CD8-positive, alpha-beta T cell (primary cell): ENCODE measurements at regions of chr17 and their contacts with region 1.

Region 1: GRCh38 chr17:3723556-3724369 is at the start of gene HASPIN:
- DNase-seq: peak; percentile 80 to 96 (median 90)
- ATAC-seq: peak; percentile 90
- H3K4me3 ChIP-seq: peak within 1 kb of the TSS; percentile 89 to 99
- H3K4me3 Mint-ChIP-seq: peak within 1 kb of the TSS; percentile 88
- H3K27ac ChIP-seq: peak within 1 kb of the TSS; percentile 63 to 72
- H3K27ac Mint-ChIP-seq: peak within 1 kb of the TSS; percentile 84
- H3K4me1 ChIP-seq: peaks cover 25% of the 10 kb centered on the region
- H3K4me1 Mint-ChIP-seq: peaks cover 35% of the 10 kb centered on the region
- H3K27me3 ChIP-seq: no peaks in the 10 kb centered on the region
- H3K27me3 Mint-ChIP-seq: no peaks in the 10 kb centered on the region
- CTCF ChIP-seq: no peak
- total RNA-seq, gene HASPIN: 0.38 to 0.58 TPM

Region 2: DNA sequence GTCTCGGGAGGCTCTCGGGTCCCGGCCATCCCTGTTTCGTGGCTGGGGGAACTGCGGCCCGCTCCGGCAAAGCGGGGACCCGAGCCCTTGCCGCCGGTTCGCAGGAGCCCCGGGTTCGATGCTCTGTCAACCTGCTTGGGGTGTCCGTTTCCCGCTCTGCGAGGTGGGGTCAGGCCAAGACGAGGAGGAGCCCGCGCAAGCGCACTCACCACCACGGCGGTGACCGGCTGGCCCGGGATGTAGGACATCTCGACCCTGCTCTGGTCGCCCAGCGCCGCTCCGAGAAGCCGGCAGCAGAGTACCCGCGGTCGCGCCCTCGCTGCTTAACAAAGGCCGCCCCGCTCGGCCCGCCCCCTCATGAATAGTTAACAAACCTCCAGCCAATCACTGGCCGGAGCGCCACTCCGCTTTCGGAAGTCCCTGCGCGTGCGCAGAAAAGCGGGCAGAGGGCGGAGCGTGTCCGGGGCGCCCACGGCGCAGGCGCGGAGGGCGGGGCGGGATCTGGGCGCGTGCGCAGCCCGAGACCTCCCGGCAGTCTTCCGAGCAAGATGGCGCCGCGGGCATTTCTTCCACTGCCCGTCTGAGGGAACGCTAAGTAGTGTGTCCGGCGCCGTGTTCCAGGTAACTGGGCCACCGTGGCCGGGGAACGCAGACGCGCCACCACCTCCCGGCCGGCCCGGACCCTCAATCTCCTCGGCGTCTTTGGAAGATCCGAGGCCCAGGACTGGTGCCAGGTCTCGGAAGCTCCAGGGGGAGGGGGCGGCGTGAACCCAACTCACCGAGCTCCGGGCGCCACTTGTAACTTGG is 55.3 kb before region 1 on chr17 and contains the starts of genes EMC6 and TAX1BP3:
- CTCF ChIA-PET with region 1: no interaction called
- POLR2A ChIA-PET with region 1: no interaction called
- intact Hi-C with region 1: loop called in 1 of 2 experiments (anchors 2 kb)
- DNase-seq: peak; percentile 97 to 100 (median 98)
- ATAC-seq: peak; percentile 92
- H3K4me3 ChIP-seq: peak within 1 kb of the TSS; percentile 73 to 100
- H3K4me3 Mint-ChIP-seq: peak within 1 kb of the TSS; percentile 90
- H3K27ac ChIP-seq: peak within 1 kb of the TSS; percentile 58 to 86
- H3K27ac Mint-ChIP-seq: peak within 1 kb of the TSS; percentile 81
- H3K4me1 ChIP-seq: peaks cover 21% of the 10 kb centered on the region
- H3K4me1 Mint-ChIP-seq: peaks cover 22% of the 10 kb centered on the region
- H3K27me3 ChIP-seq: no peaks in the 10 kb centered on the region
- H3K27me3 Mint-ChIP-seq: no peaks in the 10 kb centered on the region
- CTCF ChIP-seq: no peak
- total RNA-seq, gene EMC6: 39.4 to 41.6 TPM
- total RNA-seq, gene TAX1BP3: 5.5 to 5.8 TPM

Region 3: GRCh38 chr17:3695723-3696411 is 27.9 kb before region 1 on chr17 and contains the start of gene P2RX5:
- CTCF ChIA-PET with region 1: interaction called, 3 read pairs
- POLR2A ChIA-PET with region 1: interaction called, 8 read pairs
- intact Hi-C with region 1: loop called (anchors 1 kb)
- DNase-seq: peak in 8 of 9 experiments; percentile 22 to 73 (median 44)
- ATAC-seq: peak; percentile 65
- H3K4me3 ChIP-seq: peak within 1 kb of the TSS; percentile 58 to 68
- H3K4me3 Mint-ChIP-seq: peak within 1 kb of the TSS; percentile 96
- H3K27ac ChIP-seq: peak within 1 kb of the TSS; percentile 41 to 42
- H3K27ac Mint-ChIP-seq: peak within 1 kb of the TSS; percentile 93
- H3K4me1 ChIP-seq: peaks cover 15% of the 10 kb centered on the region
- H3K4me1 Mint-ChIP-seq: peaks cover 23% of the 10 kb centered on the region
- H3K27me3 ChIP-seq: no peaks in the 10 kb centered on the region
- H3K27me3 Mint-ChIP-seq: no peaks in the 10 kb centered on the region
- CTCF ChIP-seq: no peak
- total RNA-seq, gene P2RX5: 15.3 to 18.7 TPM

Region 4: GRCh38 chr17:3754458-3755334 is 30.9 kb after region 1 on chr17:
- CTCF ChIA-PET with region 1: interaction called, 3 read pairs
- POLR2A ChIA-PET with region 1: no interaction called
- intact Hi-C with region 1: loop called in 1 of 2 experiments (anchors 1 kb)
- DNase-seq: peak; percentile 69 to 89 (median 82)
- ATAC-seq: peak; percentile 96
- H3K4me3 ChIP-seq: peak overlapping the region; percentile 23 to 53
- H3K4me3 Mint-ChIP-seq: peak overlapping the region; percentile 56
- H3K27ac ChIP-seq: peak overlapping the region; percentile 45 to 73
- H3K27ac Mint-ChIP-seq: peak overlapping the region; percentile 90
- H3K4me1 ChIP-seq: peaks cover 36% of the 10 kb centered on the region
- H3K4me1 Mint-ChIP-seq: peaks cover 39% of the 10 kb centered on the region
- H3K27me3 ChIP-seq: no peaks in the 10 kb centered on the region
- H3K27me3 Mint-ChIP-seq: no peaks in the 10 kb centered on the region
- CTCF ChIP-seq: no peak

Region 5: DNA sequence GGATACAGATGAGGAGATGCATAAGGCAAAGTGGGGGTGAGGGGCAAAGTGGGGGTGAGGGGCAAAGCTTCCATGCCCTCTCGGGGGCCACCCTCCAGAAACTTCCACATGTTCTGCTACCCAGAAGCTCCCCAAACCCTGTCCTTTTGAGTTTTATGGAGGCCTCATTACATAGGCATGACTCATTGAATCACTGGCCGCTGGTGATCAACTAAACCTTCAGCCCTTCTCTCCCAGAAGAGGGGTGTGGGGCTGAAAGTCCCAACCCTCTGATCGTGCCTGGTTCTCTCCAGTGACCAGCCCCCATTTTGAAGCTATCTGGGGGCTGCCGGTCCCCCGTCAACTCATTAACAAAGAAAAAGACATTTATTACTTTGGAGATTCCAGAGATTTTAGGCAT is 49.7 kb after region 1 on chr17:
- CTCF ChIA-PET with region 1: no interaction called
- POLR2A ChIA-PET with region 1: no interaction called
- intact Hi-C with region 1: no loop called
- DNase-seq: no peak
- ATAC-seq: no peak
- H3K4me3 ChIP-seq: no peak overlapping the region
- H3K4me3 Mint-ChIP-seq: no peak overlapping the region
- H3K27ac ChIP-seq: no peak overlapping the region
- H3K27ac Mint-ChIP-seq: no peak overlapping the region
- H3K4me1 ChIP-seq: peaks cover 38% of the 10 kb centered on the region
- H3K4me1 Mint-ChIP-seq: peaks cover 37% of the 10 kb centered on the region
- H3K27me3 ChIP-seq: no peaks in the 10 kb centered on the region
- H3K27me3 Mint-ChIP-seq: no peaks in the 10 kb centered on the region
- CTCF ChIP-seq: no peak

Region 6: GRCh38 chr17:4263282-4264215 is 539.8 kb after region 1 on chr17 and contains the start of gene ANKFY1:
- CTCF ChIA-PET with region 1: no interaction called
- POLR2A ChIA-PET with region 1: no interaction called
- intact Hi-C with region 1: loop called in 1 of 2 experiments (anchors 5 kb)
- DNase-seq: peak; percentile 95 to 98 (median 97)
- ATAC-seq: peak; percentile 95
- H3K4me3 ChIP-seq: peak within 1 kb of the TSS; percentile 86 to 99
- H3K4me3 Mint-ChIP-seq: peak within 1 kb of the TSS; percentile 90
- H3K27ac ChIP-seq: peak within 1 kb of the TSS; percentile 81 to 88
- H3K27ac Mint-ChIP-seq: peak within 1 kb of the TSS; percentile 91
- H3K4me1 ChIP-seq: peaks cover 21% of the 10 kb centered on the region
- H3K4me1 Mint-ChIP-seq: peaks cover 40% of the 10 kb centered on the region
- H3K27me3 ChIP-seq: no peaks in the 10 kb centered on the region
- H3K27me3 Mint-ChIP-seq: no peaks in the 10 kb centered on the region
- CTCF ChIP-seq: no peak
- total RNA-seq, gene ANKFY1: 26.2 to 28.6 TPM